ENCODE measurements at regions of chr9 and their contacts with region 1.

Region 1: GRCh38 chr9:36450110-36450732 is 50.2 kb upstream of the RNF38 start:
- DNase-seq: peak in 9 of 35 experiments; percentile 6 to 64 (median 24)
- ATAC-seq: no peak
- H3K4me3 ChIP-seq: no peak overlapping the region
- H3K4me3 Mint-ChIP-seq: no peak overlapping the region
- H3K27ac ChIP-seq: no peak overlapping the region
- H3K27ac Mint-ChIP-seq: no peak overlapping the region
- H3K4me1 ChIP-seq: peaks cover 0 to 15% of the 10 kb centered on the region in 2 experiments
- H3K4me1 Mint-ChIP-seq: peaks cover 26 to 39% (median 27%) of the 10 kb centered on the region in 3 donors
- H3K27me3 ChIP-seq: no peaks in the 10 kb centered on the region
- H3K27me3 Mint-ChIP-seq: no peaks in the 10 kb centered on the region

Region 2: DNA sequence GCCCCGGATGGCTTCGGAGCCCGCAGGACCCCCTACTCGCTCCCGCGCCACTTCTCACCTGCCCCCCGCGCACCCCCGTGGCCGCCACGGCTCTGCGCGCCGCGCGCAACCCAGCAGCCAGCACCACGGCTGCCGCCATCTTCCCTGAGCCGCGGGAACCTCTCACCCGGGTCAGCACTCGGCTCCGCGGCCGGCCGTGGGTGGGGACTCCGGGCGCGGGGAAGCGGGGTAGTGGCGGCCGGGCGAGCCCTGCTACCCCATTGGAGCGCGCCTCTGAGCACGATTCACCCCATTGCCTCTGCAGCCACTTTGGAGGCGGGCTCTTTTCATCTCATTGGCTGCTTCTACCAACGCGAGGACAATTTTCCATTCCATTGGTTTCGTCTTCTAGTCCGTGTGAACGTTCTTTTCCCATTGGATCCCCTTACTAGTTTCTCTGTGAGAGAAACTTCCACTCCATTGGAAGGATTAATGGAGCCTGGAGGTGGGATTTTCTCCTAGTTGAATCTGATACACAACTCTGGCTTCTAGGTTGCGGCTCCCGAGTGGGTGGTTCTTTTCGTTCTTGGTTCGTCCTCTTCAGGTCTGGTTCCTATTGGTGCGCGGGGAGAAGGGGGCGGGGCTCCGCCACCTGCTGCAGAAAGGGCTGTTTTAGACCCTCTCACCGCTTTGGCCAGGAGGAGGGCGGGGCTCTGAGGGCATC is 635.2 kb before region 1 on chr9 and contains the start of gene HINT2:
- CTCF ChIA-PET with region 1: interaction called in 1 of 2 experiments, 11 read pairs
- POLR2A ChIA-PET with region 1: no interaction called
- DNase-seq: peak; percentile 93 to 99 (median 97)
- ATAC-seq: peak; percentile 77 to 87 (median 86)
- H3K4me3 ChIP-seq: peak within 1 kb of the TSS; percentile 85 to 90
- H3K4me3 Mint-ChIP-seq: peak within 1 kb of the TSS; percentile 84 to 97 (median 96)
- H3K27ac ChIP-seq: peak within 1 kb of the TSS; percentile 82
- H3K27ac Mint-ChIP-seq: peak within 1 kb of the TSS; percentile 96 to 98
- H3K4me1 ChIP-seq: peaks cover 9 to 39% of the 10 kb centered on the region in 2 experiments
- H3K4me1 Mint-ChIP-seq: peaks cover 35 to 43% (median 37%) of the 10 kb centered on the region in 3 donors
- H3K27me3 ChIP-seq: no peaks in the 10 kb centered on the region
- H3K27me3 Mint-ChIP-seq: no peaks in the 10 kb centered on the region
- total RNA-seq, gene HINT2: 15.4 to 30.3 (median 28.5) TPM

Region 3: DNA sequence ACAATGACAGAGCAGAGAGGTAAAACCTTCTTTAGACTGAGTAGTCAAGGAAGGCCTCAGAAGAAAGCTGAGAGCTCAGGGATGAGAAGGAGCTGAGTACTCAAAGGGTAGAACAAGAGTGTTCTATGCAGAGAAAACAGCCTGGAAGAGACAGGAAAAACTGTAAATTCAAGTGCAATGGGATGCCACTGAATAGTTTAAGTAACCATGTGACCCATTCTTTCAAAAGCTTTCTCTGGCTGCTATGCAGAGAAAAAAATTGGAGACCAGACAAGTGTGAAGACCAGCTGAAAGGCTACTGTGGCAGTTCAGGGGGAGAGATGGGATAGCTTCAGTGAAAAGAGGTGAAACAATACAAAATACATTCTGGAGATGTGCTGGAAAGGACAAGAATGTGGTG is 11.1 kb after region 1 on chr9:
- CTCF ChIA-PET with region 1: no interaction called
- POLR2A ChIA-PET with region 1: interaction called in 1 of 2 experiments, 13 read pairs
- DNase-seq: no peak
- ATAC-seq: peak in 1 of 4 experiments; percentile 23
- H3K4me3 ChIP-seq: no peak overlapping the region
- H3K4me3 Mint-ChIP-seq: no peak overlapping the region
- H3K27ac ChIP-seq: peak overlapping the region; percentile 16
- H3K27ac Mint-ChIP-seq: peak overlapping the region; percentile 77 to 85
- H3K4me1 ChIP-seq: peaks cover 21 to 28% of the 10 kb centered on the region in 2 experiments
- H3K4me1 Mint-ChIP-seq: peaks cover 62 to 75% (median 70%) of the 10 kb centered on the region in 3 donors
- H3K27me3 ChIP-seq: no peaks in the 10 kb centered on the region
- H3K27me3 Mint-ChIP-seq: no peaks in the 10 kb centered on the region

Region 4: GRCh38 chr9:36499174-36499890 is 49.1 kb after region 1 on chr9:
- CTCF ChIA-PET with region 1: interaction called in 1 of 2 experiments, 3 read pairs
- POLR2A ChIA-PET with region 1: interaction called in 1 of 2 experiments, 17 read pairs
- DNase-seq: no peak
- ATAC-seq: no peak
- H3K4me3 ChIP-seq: no peak overlapping the region
- H3K4me3 Mint-ChIP-seq: no peak overlapping the region
- H3K27ac ChIP-seq: no peak overlapping the region
- H3K27ac Mint-ChIP-seq: no peak overlapping the region
- H3K4me1 ChIP-seq: peaks cover 7 to 8% of the 10 kb centered on the region in 2 experiments
- H3K4me1 Mint-ChIP-seq: peaks cover 23 to 41% (median 34%) of the 10 kb centered on the region in 3 donors
- H3K27me3 ChIP-seq: no peaks in the 10 kb centered on the region
- H3K27me3 Mint-ChIP-seq: no peaks in the 10 kb centered on the region

Region 5: GRCh38 chr9:36560857-36561221 is 110.6 kb after region 1 on chr9:
- CTCF ChIA-PET with region 1: interaction called, 4 to 10 read pairs
- POLR2A ChIA-PET with region 1: interaction called in 1 of 2 experiments, 7 read pairs
- DNase-seq: no peak
- ATAC-seq: no peak
- H3K4me3 ChIP-seq: no peak overlapping the region
- H3K4me3 Mint-ChIP-seq: no peak overlapping the region
- H3K27ac ChIP-seq: no peak overlapping the region
- H3K27ac Mint-ChIP-seq: no peak overlapping the region
- H3K4me1 ChIP-seq: no peaks in the 10 kb centered on the region
- H3K4me1 Mint-ChIP-seq: peaks cover 0 to under 1% (median 0%) of the 10 kb centered on the region in 3 donors
- H3K27me3 ChIP-seq: peaks cover 0 to 4% of the 10 kb centered on the region in 2 experiments
- H3K27me3 Mint-ChIP-seq: no peaks in the 10 kb centered on the region